PC-9 (cell line): ENCODE measurements at regions of chr9 and their contacts with region 1.

Region 1: DNA sequence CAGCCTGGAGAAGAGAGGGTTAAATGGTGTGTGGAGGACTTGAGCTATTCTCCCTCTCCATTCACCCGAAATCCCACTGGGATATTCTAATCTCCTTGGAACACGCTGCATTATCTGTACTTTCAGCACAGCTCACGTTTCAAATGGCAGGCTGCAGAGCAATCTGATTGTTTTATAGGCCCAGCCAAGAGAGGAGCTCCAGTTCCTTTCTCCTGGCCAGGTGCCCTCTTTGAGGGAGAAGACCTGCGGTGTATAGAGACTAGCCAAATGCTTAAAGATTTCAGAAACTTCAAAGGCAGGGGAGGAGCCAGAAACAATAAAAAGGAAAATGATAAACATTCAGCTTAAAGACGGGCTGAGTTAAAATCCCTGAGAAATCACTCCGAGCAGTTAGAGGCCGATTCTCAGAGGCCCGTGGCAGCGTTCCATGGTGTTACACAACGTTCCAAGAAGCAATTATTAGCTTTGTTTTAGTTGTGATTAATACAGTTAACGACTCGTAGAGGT is 564.0 kb upstream of the KLF4 start:
- DNase-seq: no peak
- H3K4me3 ChIP-seq: no peak overlapping the region
- H3K27ac ChIP-seq: no peak overlapping the region
- H3K4me1 ChIP-seq: peaks cover 58% of the 10 kb centered on the region
- H3K27me3 ChIP-seq: no peaks in the 10 kb centered on the region
- CTCF ChIP-seq: no peak

Region 2: DNA sequence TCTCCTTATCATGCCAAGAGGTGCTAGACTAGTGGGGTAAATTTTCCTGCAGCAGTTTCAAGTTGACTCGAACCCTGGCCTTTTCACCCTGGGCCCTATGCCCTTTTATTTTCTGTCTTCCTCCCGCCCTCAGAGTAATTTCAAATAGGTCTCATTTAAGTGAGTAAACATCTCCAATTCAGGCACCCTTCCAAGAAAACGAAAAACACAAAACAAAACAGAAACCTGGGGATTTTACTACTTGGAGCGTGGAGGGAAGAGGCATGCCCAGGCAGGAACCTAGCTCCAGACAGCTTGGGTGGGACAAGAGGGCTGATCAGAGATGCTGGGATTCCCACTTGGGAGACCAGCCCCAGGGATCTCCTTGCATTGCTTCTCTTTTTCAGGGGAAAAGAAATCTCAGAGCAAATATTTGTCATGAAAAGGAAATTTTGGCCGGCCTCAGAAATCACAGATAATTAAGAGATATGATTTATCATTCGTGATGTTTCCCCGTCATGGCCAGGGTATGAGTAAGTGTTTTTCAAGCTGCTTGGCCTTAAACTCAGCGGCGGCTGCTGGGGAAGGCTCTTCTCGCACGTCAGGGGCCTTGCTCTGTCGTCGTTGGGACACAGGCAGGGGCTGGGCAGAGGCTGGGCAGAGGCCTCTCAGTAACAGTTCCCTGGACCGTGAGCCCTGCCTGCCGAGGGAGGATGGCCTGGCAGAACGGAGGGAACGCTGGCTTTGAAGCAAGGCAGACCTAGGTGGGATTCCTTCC is 315.4 kb before region 1 on chr9:
- CTCF ChIA-PET with region 1: no interaction called
- POLR2A ChIA-PET with region 1: no interaction called
- intact Hi-C with region 1: no loop called
- DNase-seq: no peak
- H3K4me3 ChIP-seq: no peak overlapping the region
- H3K27ac ChIP-seq: no peak overlapping the region
- H3K4me1 ChIP-seq: peaks cover 12% of the 10 kb centered on the region
- H3K27me3 ChIP-seq: no peaks in the 10 kb centered on the region
- CTCF ChIP-seq: no peak

Region 3: GRCh38 chr9:107890921-107891465 is 162.6 kb before region 1 on chr9:
- CTCF ChIA-PET with region 1: no interaction called
- POLR2A ChIA-PET with region 1: no interaction called
- intact Hi-C with region 1: no loop called
- DNase-seq: no peak
- H3K4me3 ChIP-seq: no peak overlapping the region
- H3K27ac ChIP-seq: no peak overlapping the region
- H3K4me1 ChIP-seq: no peaks in the 10 kb centered on the region
- H3K27me3 ChIP-seq: no peaks in the 10 kb centered on the region
- CTCF ChIP-seq: no peak

Region 4: GRCh38 chr9:108093773-108094675 is 40.4 kb after region 1 on chr9:
- CTCF ChIA-PET with region 1: interaction called, 3 read pairs
- POLR2A ChIA-PET with region 1: interaction called, 3 read pairs
- intact Hi-C with region 1: loop called (anchors 2 kb)
- DNase-seq: peak; percentile 60 to 79
- H3K4me3 ChIP-seq: no peak overlapping the region
- H3K27ac ChIP-seq: peak overlapping the region; percentile 85
- H3K4me1 ChIP-seq: peaks cover 30% of the 10 kb centered on the region
- H3K27me3 ChIP-seq: no peaks in the 10 kb centered on the region
- CTCF ChIP-seq: no peak

Region 5: DNA sequence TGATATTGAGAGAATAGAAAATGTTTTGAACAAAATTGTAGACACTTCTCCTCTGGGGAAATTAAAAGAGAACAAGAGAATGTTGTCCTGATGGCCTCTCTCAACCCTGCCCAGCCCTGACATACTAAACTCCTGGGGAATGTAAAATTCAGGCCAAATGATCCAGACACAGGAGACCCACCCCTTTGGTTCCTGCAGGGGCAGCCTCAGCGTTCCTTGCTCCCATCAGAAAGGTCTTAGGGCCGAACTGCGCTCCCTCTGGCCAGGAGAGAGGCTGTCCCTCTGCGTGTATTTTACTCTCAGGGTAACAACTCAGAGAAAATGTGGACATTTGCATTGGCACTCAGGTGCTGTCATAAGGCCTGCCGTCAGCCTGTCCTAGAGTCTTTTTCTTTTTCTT is 52.3 kb after region 1 on chr9:
- CTCF ChIA-PET with region 1: no interaction called
- POLR2A ChIA-PET with region 1: no interaction called
- intact Hi-C with region 1: no loop called
- DNase-seq: no peak
- H3K4me3 ChIP-seq: no peak overlapping the region
- H3K27ac ChIP-seq: no peak overlapping the region
- H3K4me1 ChIP-seq: peaks cover 2% of the 10 kb centered on the region
- H3K27me3 ChIP-seq: no peaks in the 10 kb centered on the region
- CTCF ChIP-seq: no peak

Region 6: GRCh38 chr9:108182950-108183381 is 129.4 kb after region 1 on chr9:
- CTCF ChIA-PET with region 1: no interaction called
- POLR2A ChIA-PET with region 1: no interaction called
- intact Hi-C with region 1: loop called (anchors 10 kb)
- DNase-seq: no peak
- H3K4me3 ChIP-seq: no peak overlapping the region
- H3K27ac ChIP-seq: no peak overlapping the region
- H3K4me1 ChIP-seq: no peaks in the 10 kb centered on the region
- H3K27me3 ChIP-seq: no peaks in the 10 kb centered on the region
- CTCF ChIP-seq: no peak

Region 7: GRCh38 chr9:108478431-108478837 is 424.8 kb after region 1 on chr9:
- CTCF ChIA-PET with region 1: interaction called, 13 read pairs
- POLR2A ChIA-PET with region 1: no interaction called
- intact Hi-C with region 1: no loop called
- DNase-seq: peak; percentile 57 to 93
- H3K4me3 ChIP-seq: no peak overlapping the region
- H3K27ac ChIP-seq: peak overlapping the region; percentile 87
- H3K4me1 ChIP-seq: peaks cover 48% of the 10 kb centered on the region
- H3K27me3 ChIP-seq: no peaks in the 10 kb centered on the region
- CTCF ChIP-seq: no peak